ENCODE measurements at regions of chr17 and their contacts with region 1.

Region 1: GRCh38 chr17:1716076-1716995 is 6.2 kb upstream of the TLCD2 start:
- DNase-seq: peak; percentile 100
- ATAC-seq: peak; percentile 76
- H3K4me3 ChIP-seq: peak overlapping the region; percentile 85 to 94
- H3K27ac ChIP-seq: peak overlapping the region; percentile 99
- H3K4me1 ChIP-seq: peaks cover 28 to 66% of the 10 kb centered on the region in 2 experiments
- H3K27me3 ChIP-seq: no peaks in the 10 kb centered on the region
- CTCF ChIP-seq: no peak
- POLR2A ChIP-seq: no peak
- RAD21 ChIP-seq: no peak

Region 2: GRCh38 chr17:1561400-1562175 is 154.7 kb before region 1 on chr17:
- CTCF ChIA-PET with region 1: no interaction called
- POLR2A ChIA-PET with region 1: interaction called, 4 read pairs
- RAD21 ChIA-PET with region 1: no interaction called
- intact Hi-C with region 1: loop called (anchors 2 kb)
- DNase-seq: no peak
- ATAC-seq: peak; percentile 37
- H3K4me3 ChIP-seq: peak overlapping the region; percentile 71 to 82
- H3K27ac ChIP-seq: peak overlapping the region; percentile 67; the same call in 1 of the 2 replicates
- H3K4me1 ChIP-seq: peaks cover 5 to 22% of the 10 kb centered on the region in 2 experiments; a peak in 3 of 4 replicates
- H3K27me3 ChIP-seq: no peaks in the 10 kb centered on the region
- CTCF ChIP-seq: 0 out of 6 replicates have a peak, but pooled peaks of 1 of the 3 experiments have one; percentile 7
- POLR2A ChIP-seq: no peak
- RAD21 ChIP-seq: no peak

Region 3: GRCh38 chr17:1648963-1649843 is 67.1 kb before region 1 on chr17:
- CTCF ChIA-PET with region 1: interaction called, 15 read pairs
- POLR2A ChIA-PET with region 1: interaction called, 14 read pairs
- RAD21 ChIA-PET with region 1: interaction called in 1 of 2 experiments, 4 read pairs
- intact Hi-C with region 1: no loop called
- DNase-seq: peak; percentile 89
- ATAC-seq: peak; percentile 76
- H3K4me3 ChIP-seq: peak overlapping the region; percentile 40 to 72
- H3K27ac ChIP-seq: peak overlapping the region; percentile 94
- H3K4me1 ChIP-seq: peaks cover 23 to 48% of the 10 kb centered on the region in 2 experiments
- H3K27me3 ChIP-seq: no peaks in the 10 kb centered on the region
- CTCF ChIP-seq: peak in 2 of 3 experiments; percentile 86 to 97; a peak in 5 of 6 replicates
- POLR2A ChIP-seq: no peak
- RAD21 ChIP-seq: peak; percentile 61

Region 4: GRCh38 chr17:1684378-1685189 is 31.8 kb before region 1 on chr17 and contains the start of gene PRPF8:
- CTCF ChIA-PET with region 1: no interaction called
- POLR2A ChIA-PET with region 1: interaction called, 6 read pairs
- RAD21 ChIA-PET with region 1: interaction called in 1 of 2 experiments, 4 read pairs
- intact Hi-C with region 1: loop called (anchors 2 kb)
- DNase-seq: peak; percentile 92
- ATAC-seq: peak; percentile 98
- H3K4me3 ChIP-seq: peak within 1 kb of the TSS; percentile 83 to 85
- H3K27ac ChIP-seq: peak within 1 kb of the TSS; percentile 90
- H3K4me1 ChIP-seq: peaks cover 16 to 27% of the 10 kb centered on the region in 2 experiments
- H3K27me3 ChIP-seq: no peaks in the 10 kb centered on the region
- CTCF ChIP-seq: no peak
- POLR2A ChIP-seq: peak; percentile 66
- RAD21 ChIP-seq: no peak
- total RNA-seq, gene PRPF8: 386 TPM

Region 5: GRCh38 chr17:1752425-1753262 is 36.3 kb after region 1 on chr17:
- CTCF ChIA-PET with region 1: no interaction called
- POLR2A ChIA-PET with region 1: interaction called, 12 read pairs
- RAD21 ChIA-PET with region 1: no interaction called
- intact Hi-C with region 1: no loop called
- DNase-seq: peak; percentile 45
- ATAC-seq: peak; percentile 83
- H3K4me3 ChIP-seq: peak overlapping the region; percentile 34 to 35
- H3K27ac ChIP-seq: peak overlapping the region; percentile 3; the same call in 1 of the 2 replicates
- H3K4me1 ChIP-seq: peaks cover 0 to 16% of the 10 kb centered on the region in 2 experiments; a peak in 3 of 4 replicates
- H3K27me3 ChIP-seq: no peaks in the 10 kb centered on the region
- CTCF ChIP-seq: no peak
- POLR2A ChIP-seq: no peak
- RAD21 ChIP-seq: no peak; the same call in 1 of the 2 replicates

Region 6: DNA sequence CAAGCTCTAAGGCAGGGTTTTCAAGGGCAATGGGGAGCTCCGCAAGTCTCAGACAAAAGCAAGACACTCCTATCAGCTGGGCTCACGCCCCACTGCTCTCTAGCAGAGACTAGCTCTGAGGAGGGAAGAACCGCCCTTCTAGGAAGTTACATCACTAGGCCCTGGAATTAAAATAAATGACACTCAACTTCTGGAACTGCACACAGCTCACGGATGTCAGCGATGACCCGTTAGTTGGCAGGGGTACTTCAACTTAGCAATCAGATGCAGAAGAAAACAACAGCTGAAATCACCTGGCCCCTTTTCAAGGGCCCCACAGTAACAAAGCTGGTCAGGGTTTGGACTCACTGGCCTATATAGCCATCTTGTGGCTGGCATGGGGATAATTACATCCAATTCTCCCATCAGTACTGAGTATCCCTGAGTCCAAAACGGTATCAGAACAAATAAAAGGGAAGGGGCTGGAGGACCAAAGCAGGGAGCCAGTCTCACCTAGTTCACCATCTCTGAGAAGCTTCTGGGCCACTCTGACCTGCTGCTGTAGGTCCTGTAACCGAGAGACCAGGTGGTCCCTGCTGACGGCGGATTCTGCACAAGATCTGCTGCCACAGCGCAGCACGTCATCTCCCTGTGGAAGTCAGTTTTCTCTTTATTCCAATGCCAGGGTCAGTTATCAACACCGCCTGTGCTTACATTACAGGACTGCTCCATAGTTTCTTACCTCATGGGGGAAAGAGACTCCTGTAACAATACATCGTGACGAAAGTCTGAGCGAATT is 67.7 kb after region 1 on chr17:
- CTCF ChIA-PET with region 1: interaction called, 39 read pairs
- POLR2A ChIA-PET with region 1: interaction called, 6 read pairs
- RAD21 ChIA-PET with region 1: interaction called, 4 to 9 read pairs
- intact Hi-C with region 1: loop called (anchors 1 kb)
- DNase-seq: peak; percentile 6
- ATAC-seq: peak; percentile 69
- H3K4me3 ChIP-seq: no peak overlapping the region
- H3K27ac ChIP-seq: 0 out of 2 replicates have a peak overlapping the region, but pooled peaks have one; percentile 4
- H3K4me1 ChIP-seq: peaks cover 10 to 27% of the 10 kb centered on the region in 2 experiments
- H3K27me3 ChIP-seq: no peaks in the 10 kb centered on the region
- CTCF ChIP-seq: peak; percentile 54 to 62 (median 56); a peak in 4 of 6 replicates
- POLR2A ChIP-seq: no peak
- RAD21 ChIP-seq: peak; percentile 72

Region 7: DNA sequence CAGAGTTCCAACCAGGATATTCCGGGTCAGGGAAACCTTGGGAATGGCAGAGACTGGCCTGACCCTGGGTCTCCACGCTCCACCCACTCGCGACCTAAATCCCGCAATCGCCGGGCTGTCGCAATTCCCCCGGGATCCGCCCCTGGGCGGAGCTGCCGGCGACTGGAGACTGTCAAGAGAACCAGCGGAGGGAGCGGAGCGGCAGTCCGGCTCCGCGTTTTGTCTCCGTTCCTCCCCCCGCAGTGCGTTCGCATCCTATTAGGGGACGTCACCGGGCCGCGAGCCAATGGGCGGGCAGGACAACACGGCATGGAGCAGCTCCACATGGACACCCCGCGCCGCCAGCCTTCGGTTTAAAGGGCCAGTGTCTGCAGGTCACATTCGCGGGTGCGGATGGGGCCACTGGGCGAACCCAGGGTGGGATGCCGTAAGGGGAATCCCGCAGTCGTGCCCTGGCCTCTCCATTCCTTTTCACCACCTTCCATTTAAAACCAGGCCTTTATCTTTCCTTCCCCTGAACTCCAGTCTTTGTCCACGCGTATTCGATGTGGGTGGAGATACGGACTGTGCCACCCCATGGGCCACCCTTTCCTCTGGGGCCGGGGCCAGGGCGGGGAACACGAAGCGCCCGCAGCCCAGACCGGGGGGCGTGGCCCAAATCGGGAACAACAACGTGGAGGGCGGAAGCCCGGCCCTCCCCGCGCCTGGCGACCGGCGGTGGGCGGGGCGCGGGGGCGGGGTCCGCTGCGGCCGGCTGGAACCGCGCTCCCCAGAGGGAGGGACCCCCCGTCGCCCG is 685.3 kb after region 1 on chr17:
- CTCF ChIA-PET with region 1: no interaction called
- POLR2A ChIA-PET with region 1: no interaction called
- RAD21 ChIA-PET with region 1: no interaction called
- intact Hi-C with region 1: loop called (anchors 10 kb)
- DNase-seq: peak; percentile 98
- ATAC-seq: peak; percentile 56
- H3K4me3 ChIP-seq: peak overlapping the region; percentile 48 to 96
- H3K27ac ChIP-seq: peak overlapping the region; percentile 97
- H3K4me1 ChIP-seq: peaks cover 49 to 83% of the 10 kb centered on the region in 2 experiments
- H3K27me3 ChIP-seq: no peaks in the 10 kb centered on the region
- CTCF ChIP-seq: no peak
- POLR2A ChIP-seq: no peak
- RAD21 ChIP-seq: no peak